AG04449 (cell line): ENCODE measurements at regions of chr5 and their contacts with region 1.

Region 1: GRCh38 chr5:43661102-43661501 is 58.1 kb downstream of the NNT start:
- DNase-seq: no peak
- H3K4me3 ChIP-seq: no peak overlapping the region
- CTCF ChIP-seq: no peak

Region 2: DNA sequence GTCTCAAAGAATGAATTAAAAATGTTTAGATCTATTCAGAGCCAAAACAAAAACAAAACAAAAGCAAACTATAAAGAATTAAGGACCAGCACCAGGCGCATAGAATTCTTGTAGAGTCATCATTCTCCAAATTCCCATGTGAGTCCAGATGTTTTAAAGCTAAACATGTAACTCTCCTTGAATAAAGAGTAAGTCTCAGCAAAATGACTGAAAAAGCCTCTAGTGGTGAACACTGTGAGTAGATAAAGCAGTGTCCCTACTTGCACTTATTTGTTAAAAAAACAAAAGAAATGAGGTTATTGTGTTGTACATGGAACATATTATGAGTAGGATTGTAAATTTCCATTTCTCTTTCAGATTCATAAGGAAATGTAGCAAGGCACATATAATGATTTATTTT is 14.1 kb before region 1 on chr5:
- CTCF ChIA-PET with region 1: interaction called, 17 read pairs
- POLR2A ChIA-PET with region 1: no interaction called
- DNase-seq: no peak
- H3K4me3 ChIP-seq: no peak overlapping the region
- CTCF ChIP-seq: no peak

Region 3: DNA sequence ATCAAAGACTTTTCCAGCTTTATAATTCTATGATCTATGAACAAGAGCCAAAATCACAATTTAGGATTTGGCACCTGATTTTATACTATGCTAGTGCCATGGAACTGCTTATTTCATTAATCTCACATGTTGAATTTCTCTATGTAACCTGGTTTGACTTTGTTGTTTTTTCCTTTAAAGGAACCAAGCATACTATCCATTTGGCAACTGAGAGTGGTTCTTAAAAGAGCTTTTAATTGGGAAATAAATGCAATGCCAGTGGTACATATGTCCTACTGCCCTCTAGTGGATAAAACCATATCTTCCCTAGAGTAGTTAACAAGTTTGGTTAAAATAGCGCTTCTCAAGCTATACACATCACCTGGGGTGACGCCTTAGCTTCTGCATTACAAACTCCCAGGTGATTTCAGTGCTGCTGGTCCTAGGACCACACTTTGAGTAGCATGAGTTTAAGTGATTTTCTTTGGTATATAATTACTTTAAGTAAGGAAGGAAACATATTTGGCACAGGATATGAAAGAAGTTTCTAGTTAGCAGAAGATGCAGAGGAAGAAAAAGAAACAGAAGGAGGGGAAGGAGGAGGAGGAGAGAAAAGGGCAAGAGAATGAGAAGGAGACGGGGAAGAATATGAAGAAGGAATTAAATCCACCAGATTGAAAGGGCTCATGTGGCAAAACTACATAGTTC is 671.3 kb after region 1 on chr5:
- CTCF ChIA-PET with region 1: interaction called, 24 read pairs
- POLR2A ChIA-PET with region 1: no interaction called
- DNase-seq: peak; percentile 2
- H3K4me3 ChIP-seq: no peak overlapping the region
- CTCF ChIP-seq: peak; percentile 27